ENCODE measurements at regions of chr5 and their contacts with region 1.

Region 1: DNA sequence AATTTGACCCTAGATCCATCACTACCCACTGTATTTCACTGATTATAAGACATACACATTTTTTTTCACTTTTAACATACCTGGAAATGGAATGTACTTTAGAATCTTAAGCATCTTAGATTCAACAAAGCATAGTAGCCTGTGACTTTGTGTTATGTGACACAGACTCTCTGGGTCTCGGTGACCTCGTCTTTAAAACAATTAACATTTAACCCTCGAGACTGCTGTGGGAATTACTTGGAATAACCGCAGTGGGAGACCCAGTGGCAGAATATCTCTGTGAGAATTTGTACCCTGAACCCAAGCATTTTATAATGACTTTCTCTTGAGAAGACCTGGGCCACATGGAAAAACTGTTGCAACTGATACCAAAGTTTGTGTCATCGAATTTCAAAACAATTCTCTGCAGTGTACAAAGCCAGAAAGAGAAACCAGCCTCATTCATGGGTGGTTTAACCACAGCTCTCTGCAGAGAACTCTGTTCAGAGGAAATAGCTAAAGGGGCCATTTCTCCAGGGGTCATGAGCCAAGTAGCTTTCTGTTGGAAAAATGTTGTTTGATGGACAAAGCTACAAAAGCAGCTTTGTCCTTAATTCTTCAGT is 10.0 kb upstream of the RETREG1 start:
- DNase-seq: peak; percentile 25
- H3K4me3 Mint-ChIP-seq: no peak overlapping the region
- H3K27ac Mint-ChIP-seq: peak overlapping the region; percentile 51
- H3K4me1 Mint-ChIP-seq: peaks cover 26% of the 10 kb centered on the region
- H3K27me3 Mint-ChIP-seq: no peaks in the 10 kb centered on the region

Region 2: GRCh38 chr5:16616536-16617273 is 10.1 kb before region 1 on chr5 and contains the start of gene RETREG1:
- CTCF ChIA-PET with region 1: no interaction called
- POLR2A ChIA-PET with region 1: interaction called, 50 read pairs
- DNase-seq: peak; percentile 79
- H3K4me3 Mint-ChIP-seq: peak within 1 kb of the TSS; percentile 87
- H3K27ac Mint-ChIP-seq: peak within 1 kb of the TSS; percentile 63
- H3K4me1 Mint-ChIP-seq: peaks cover 25% of the 10 kb centered on the region
- H3K27me3 Mint-ChIP-seq: peaks cover 10% of the 10 kb centered on the region
- total RNA-seq, gene RETREG1: 15.1 to 17.3 TPM